ENCODE measurements at regions of chr10 and their contacts with region 1.

Region 1: DNA sequence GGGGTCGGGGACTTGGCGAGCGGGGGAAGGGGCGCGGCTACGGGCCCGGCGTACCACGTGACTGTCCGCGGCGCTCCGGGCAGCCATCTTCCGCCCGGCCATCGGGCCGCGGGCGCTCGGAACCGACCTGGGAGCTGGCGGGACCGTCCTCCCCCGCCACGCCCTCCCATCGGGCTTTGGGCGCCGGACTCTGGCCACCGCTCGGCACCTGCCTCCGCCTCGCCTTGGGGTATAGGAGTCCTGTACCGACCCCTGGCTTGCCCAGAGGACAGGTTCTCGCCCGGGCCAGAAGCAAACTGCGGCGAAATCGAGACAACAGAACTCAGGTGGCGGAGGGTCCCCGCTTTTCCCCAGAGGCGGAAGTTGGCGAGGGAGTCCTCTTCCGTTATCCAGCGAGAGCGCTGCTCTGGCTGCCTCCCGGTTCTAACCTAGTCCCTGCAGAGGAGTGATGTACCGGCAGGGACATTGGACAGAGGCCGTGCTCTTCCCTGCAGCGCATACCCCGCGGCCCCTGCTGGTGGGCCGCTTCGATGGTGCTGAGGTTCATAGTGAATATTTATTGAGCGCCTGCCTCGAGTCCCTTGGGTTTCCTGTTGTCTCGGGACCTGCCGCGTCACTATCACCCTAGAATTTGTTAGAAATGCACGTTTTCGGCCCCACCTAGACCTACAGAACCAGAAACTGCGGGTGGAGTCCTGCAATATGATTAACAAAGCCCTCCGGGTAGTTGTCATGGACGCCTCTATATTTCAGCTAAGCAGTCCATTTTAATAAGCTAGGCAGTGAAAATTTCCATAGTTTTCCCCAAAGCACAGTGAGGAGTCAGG is 1.3 kb upstream of the SGMS1 start:
- DNase-seq: peak; percentile 70 to 93 (median 89)
- ATAC-seq: peak; percentile 48 to 82 (median 68)
- H3K4me3 ChIP-seq: peak overlapping the region; percentile 68 to 98 (median 92)
- H3K27ac ChIP-seq: peak overlapping the region; percentile 96 to 99 (median 99)
- H3K4me1 ChIP-seq: peaks cover 0 to 28% (median 18%) of the 10 kb centered on the region in 12 donors
- H3K27me3 ChIP-seq: no peaks in the 10 kb centered on the region
- CTCF ChIP-seq: peak; percentile 45 to 79 (median 65)
- POLR2A ChIP-seq: peak in 1 of 2 donors; percentile 37

Region 2: DNA sequence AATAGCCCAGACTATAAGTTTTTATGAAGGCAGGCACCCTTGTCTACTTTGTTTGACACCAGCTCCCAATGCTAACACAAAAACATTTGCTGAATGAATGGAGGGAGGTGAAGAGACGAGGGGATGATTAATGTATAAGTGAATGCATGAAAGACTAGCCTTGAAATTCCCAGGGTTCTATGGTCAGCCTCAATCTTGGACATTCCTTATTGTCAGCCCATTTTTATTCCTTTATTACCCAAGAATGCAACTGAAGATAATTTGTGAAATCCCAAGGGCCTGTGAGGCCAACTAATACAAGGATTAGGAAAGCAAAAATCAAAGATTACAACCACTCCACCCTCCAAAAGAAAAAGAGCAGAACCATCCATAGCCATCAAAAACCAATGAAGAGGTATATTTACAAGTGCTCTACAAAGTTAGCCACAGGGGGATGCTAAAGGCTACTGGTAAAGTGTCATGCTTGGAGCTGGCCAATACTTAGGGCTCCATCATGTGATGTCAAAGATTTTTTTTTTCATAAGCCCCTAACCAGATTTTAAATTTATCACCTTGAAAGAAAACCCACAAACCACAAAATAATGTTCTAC is 333.7 kb before region 1 on chr10:
- intact Hi-C with region 1: loop called in 6 of 10 experiments (anchors 5 to 10 kb)
- DNase-seq: no peak
- ATAC-seq: peak in 3 of 4 donors; percentile 50 to 57 (median 52)
- H3K4me3 ChIP-seq: no peak overlapping the region
- H3K27ac ChIP-seq: no peak overlapping the region
- H3K4me1 ChIP-seq: peaks cover 0 to 10% (median 0%) of the 10 kb centered on the region in 12 donors
- H3K27me3 ChIP-seq: no peaks in the 10 kb centered on the region
- CTCF ChIP-seq: peak in 11 of 12 donors; percentile 14 to 61 (median 51)
- POLR2A ChIP-seq: no peak

Region 3: GRCh38 chr10:50325449-50326171 is 299.5 kb before region 1 on chr10:
- intact Hi-C with region 1: loop called in 3 of 10 experiments (anchors 5 to 10 kb)
- DNase-seq: peak in 4 of 5 donors; percentile 23 to 79 (median 56)
- ATAC-seq: peak; percentile 66 to 92 (median 88)
- H3K4me3 ChIP-seq: peak overlapping the region in 8 of 12 donors; percentile 10 to 50 (median 34)
- H3K27ac ChIP-seq: peak overlapping the region in 11 of 12 donors; percentile 18 to 84 (median 69)
- H3K4me1 ChIP-seq: peaks cover 0 to 84% (median 41%) of the 10 kb centered on the region in 12 donors
- H3K27me3 ChIP-seq: no peaks in the 10 kb centered on the region
- CTCF ChIP-seq: no peak
- POLR2A ChIP-seq: peak in 1 of 2 donors; percentile 8

Region 4: GRCh38 chr10:50410066-50410811 is 214.8 kb before region 1 on chr10:
- intact Hi-C with region 1: loop called in 4 of 10 experiments (anchors 5 kb)
- DNase-seq: no peak
- ATAC-seq: peak in 1 of 4 donors; percentile 24
- H3K4me3 ChIP-seq: no peak overlapping the region
- H3K27ac ChIP-seq: peak overlapping the region in 1 of 12 donors; percentile 19
- H3K4me1 ChIP-seq: peaks cover 0 to 59% (median 7%) of the 10 kb centered on the region in 12 donors
- H3K27me3 ChIP-seq: no peaks in the 10 kb centered on the region
- CTCF ChIP-seq: no peak
- POLR2A ChIP-seq: no peak

Region 5: GRCh38 chr10:50470345-50470744 is 154.7 kb before region 1 on chr10:
- intact Hi-C with region 1: loop called in 1 of 10 experiments (anchors 2 kb)
- DNase-seq: no peak
- ATAC-seq: peak in 1 of 4 donors; percentile 50
- H3K4me3 ChIP-seq: no peak overlapping the region
- H3K27ac ChIP-seq: peak overlapping the region in 3 of 12 donors; percentile 18 to 39 (median 30)
- H3K4me1 ChIP-seq: peaks cover 0 to 59% (median 29%) of the 10 kb centered on the region in 12 donors
- H3K27me3 ChIP-seq: no peaks in the 10 kb centered on the region
- CTCF ChIP-seq: no peak
- POLR2A ChIP-seq: no peak

Region 6: DNA sequence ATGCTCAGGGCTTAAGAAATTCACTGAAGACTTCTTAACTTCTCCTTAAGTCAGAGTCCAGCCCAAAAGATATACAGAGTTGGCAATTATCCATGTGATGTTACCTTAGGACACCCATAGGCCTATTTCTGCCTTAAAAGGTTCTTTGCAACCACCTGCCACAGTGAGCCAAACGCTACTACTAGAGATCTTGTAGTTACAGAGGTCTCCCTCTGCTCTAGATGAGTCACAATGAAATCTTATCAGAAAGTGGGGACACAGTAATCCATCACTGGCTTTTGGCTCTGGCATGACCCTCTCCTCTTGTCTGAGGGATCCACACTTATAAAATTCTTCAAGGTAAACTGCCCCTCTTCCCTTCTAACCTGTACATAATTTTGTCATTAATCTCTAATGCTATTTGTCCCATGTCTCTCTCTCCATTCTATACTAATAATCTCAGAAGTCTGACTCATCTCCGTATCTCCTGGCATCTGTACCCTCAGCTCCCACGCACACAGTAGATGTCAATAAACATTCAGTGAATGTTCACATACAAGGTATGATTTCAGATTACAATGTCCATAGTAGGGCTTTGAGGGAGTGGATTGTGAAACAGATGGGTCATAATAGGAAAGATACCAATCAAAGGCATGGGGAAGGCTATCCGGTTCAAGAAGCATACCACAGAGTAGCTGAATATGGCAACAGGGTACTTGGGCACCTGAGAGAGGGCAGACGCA is 113.4 kb before region 1 on chr10:
- intact Hi-C with region 1: loop called in 1 of 10 experiments (anchors 5 kb)
- DNase-seq: no peak
- ATAC-seq: peak in 2 of 4 donors; percentile 14 to 40
- H3K4me3 ChIP-seq: no peak overlapping the region
- H3K27ac ChIP-seq: peak overlapping the region in 1 of 12 donors; percentile 22
- H3K4me1 ChIP-seq: peaks cover 0 to 51% (median 26%) of the 10 kb centered on the region in 12 donors
- H3K27me3 ChIP-seq: no peaks in the 10 kb centered on the region
- CTCF ChIP-seq: no peak
- POLR2A ChIP-seq: no peak

Region 7: GRCh38 chr10:50577681-50578350 is 47.3 kb before region 1 on chr10:
- intact Hi-C with region 1: loop called in 2 of 10 experiments (anchors 1 to 5 kb)
- DNase-seq: peak in 3 of 5 donors; percentile 30 to 65 (median 40)
- ATAC-seq: peak; percentile 79 to 96 (median 86)
- H3K4me3 ChIP-seq: peak overlapping the region in 4 of 12 donors; percentile 7 to 17 (median 11)
- H3K27ac ChIP-seq: peak overlapping the region in 10 of 12 donors; percentile 52 to 68 (median 62)
- H3K4me1 ChIP-seq: peaks cover 0 to 52% (median 34%) of the 10 kb centered on the region in 12 donors
- H3K27me3 ChIP-seq: no peaks in the 10 kb centered on the region
- CTCF ChIP-seq: no peak
- POLR2A ChIP-seq: no peak

Region 8: DNA sequence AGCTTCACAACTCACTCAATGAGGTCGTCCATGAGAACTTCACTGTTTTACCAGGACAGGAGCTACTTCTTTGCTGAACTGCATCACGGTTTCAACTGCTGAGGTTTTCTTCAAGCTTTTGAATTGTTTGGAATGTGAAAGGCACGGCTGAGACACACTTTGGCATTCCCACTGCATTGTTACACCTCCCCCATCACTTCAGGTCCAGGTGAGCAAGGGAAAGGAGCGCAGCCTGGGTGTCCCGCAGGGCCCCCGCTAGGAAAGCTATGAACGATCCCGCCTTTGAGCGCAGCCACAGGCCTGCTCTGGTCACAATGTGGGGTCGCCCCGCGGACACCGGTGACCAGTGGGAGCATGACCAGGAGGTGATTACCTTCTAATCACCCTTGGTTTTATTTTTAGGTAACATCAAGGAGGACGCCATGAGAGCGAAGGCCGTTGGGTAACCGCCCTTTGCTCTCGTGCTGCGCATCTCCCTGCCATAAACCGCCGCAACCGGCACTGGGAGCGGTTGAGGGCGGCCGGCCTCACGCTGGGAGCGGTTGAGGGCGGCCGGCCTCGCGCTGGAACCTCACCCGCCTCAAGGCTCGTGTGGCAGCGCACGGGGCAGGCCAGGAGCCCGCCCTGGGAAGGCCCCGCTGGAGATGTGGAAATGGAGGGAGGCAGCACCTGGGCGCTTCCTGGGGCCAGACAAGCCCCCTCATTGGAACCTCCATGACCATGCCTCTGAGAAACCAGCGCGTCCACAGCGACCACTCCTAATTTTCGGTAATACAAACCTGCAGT is 49.6 kb after region 1 on chr10:
- intact Hi-C with region 1: no loop called
- DNase-seq: no peak
- ATAC-seq: no peak
- H3K4me3 ChIP-seq: no peak overlapping the region
- H3K27ac ChIP-seq: no peak overlapping the region
- H3K4me1 ChIP-seq: no peaks in the 10 kb centered on the region
- H3K27me3 ChIP-seq: no peaks in the 10 kb centered on the region
- CTCF ChIP-seq: no peak
- POLR2A ChIP-seq: no peak

Measured in heart left ventricle (tissue), 16 donors.